Activated CD8-positive, alpha-beta T cell treated with anti-CD3 and anti-CD28 coated beads for 36 hours (primary cell): ENCODE measurements at regions of chr5 and their contacts with region 1.

Region 1: DNA sequence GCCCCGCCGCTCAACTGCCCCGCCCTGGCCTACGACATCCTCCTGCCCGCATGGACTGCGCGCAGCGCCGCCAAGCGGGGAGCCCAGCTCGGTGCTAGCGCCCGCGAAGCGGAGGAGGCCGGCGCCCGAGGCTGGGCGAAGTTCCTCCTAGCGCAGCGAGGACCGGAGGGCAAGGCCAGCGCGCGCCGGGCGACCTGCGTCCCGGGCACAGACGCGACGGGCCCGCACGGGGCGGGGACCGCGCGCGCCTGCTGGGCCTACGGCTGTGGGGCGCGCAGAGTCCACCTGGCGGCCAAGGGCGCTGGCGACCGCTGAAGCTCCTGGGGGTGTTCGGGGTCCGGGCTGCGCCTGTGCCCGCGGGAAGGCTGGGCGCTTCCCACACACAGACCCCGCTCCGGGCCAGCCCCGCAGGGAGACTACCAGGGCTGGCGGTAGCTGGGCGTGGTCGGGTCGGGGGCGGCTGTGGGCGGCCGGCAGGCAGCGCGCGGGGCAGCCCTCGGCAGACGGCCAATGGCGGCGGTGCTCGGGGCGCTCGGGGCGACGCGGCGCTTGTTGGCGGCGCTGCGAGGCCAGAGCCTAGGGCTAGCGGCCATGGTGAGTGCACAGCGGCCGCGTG is at the start of gene PCBD2:
- DNase-seq: peak; percentile 94
- ATAC-seq: peak; percentile 90
- H3K4me3 Mint-ChIP-seq: peak within 1 kb of the TSS; percentile 92
- H3K27ac Mint-ChIP-seq: peak within 1 kb of the TSS; percentile 99
- H3K4me1 Mint-ChIP-seq: peaks cover 17% of the 10 kb centered on the region
- H3K27me3 Mint-ChIP-seq: no peaks in the 10 kb centered on the region
- CTCF ChIP-seq: peak; percentile 82
- total RNA-seq, gene PCBD2: 8.1 to 8.8 TPM

Region 2: DNA sequence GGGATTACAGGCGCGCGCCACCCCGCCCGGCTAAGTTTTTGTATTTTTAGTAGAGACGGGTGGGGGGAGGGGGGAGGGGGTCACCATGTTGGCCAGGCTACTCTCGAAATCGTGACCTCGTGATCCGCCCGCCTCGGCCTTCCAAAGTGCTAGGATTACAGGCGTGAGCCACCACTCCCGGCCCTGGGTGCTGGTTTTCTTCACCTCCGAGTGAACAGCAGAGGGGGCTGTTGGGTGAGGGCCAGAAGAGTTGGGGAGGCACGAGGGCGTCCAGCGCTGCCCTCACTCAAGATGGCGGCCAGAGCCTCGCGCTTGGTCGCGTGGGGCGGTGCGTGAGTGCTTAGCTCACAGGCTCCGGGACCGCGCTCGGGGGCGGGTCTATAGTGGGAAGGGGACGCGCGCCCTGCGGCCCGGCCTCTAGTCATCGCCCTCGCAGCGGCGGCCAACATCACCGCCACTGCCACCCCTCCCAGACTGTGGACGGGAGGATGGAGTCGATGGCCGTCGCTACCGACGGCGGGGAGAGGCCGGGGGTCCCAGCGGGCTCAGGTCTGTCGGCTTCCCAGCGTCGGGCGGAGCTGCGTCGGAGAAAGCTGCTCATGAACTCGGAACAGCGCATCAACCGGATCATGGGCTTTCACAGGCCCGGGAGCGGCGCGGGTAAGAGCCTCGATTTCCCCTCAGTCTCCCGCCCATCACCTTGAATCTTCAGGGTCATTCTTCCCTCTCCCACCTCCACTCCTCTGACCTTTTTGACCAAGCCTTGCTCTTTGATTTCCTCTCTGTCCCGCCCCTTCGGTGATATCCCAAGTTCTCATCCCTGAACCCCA is 166.4 kb before region 1 on chr5 and contains the start of gene CAMLG:
- CTCF ChIA-PET with region 1: interaction called, 14 read pairs
- POLR2A ChIA-PET with region 1: interaction called, 15 read pairs
- intact Hi-C with region 1: no loop called
- DNase-seq: peak; percentile 98
- ATAC-seq: peak; percentile 97
- H3K4me3 Mint-ChIP-seq: peak within 1 kb of the TSS; percentile 91
- H3K27ac Mint-ChIP-seq: peak within 1 kb of the TSS; percentile 86
- H3K4me1 Mint-ChIP-seq: peaks cover 18% of the 10 kb centered on the region
- H3K27me3 Mint-ChIP-seq: no peaks in the 10 kb centered on the region
- CTCF ChIP-seq: peak; percentile 59
- total RNA-seq, gene CAMLG: 33.8 to 35.9 TPM

Region 3: DNA sequence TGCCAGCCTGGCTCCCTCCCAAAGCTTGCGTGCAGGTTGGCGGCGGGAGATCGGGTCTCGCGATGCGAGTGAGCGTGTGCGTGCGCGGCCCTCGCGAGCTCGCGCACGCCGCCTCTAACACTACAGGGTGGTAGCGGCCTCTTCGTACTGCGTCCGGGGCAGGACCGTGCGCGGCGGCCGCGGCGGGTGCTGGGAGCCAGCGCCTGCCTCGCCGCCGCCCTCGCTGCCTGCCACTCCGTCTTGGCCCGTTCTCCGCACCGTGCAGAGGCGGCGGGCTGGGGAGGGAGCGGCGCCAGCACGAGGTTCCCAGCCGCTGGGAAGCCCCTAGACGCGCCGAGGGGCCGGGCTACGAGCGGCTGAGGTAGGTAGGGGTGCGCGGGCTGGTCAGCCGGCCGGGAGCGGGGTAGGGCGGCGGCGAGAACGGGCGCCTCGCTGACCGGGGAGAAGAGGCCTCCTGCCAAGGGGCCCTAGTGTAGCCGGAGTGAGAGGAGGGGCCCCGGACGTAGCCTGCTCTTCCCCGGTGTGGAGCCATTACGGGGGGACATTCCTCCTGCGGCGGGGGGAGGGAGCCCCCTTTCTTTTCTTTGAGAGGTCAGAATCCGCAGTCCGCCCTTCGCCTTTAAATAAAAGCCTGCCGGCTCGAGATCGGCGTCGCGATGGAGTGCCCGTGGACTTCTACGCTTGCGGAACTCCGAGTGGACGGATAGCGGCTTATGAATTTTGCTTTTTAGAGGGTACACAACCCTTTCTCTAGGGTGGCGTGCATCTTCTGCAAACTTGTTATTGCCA is 58.7 kb before region 1 on chr5 and contains the start of gene C5orf24:
- CTCF ChIA-PET with region 1: interaction called, 21 read pairs
- POLR2A ChIA-PET with region 1: interaction called, 18 read pairs
- intact Hi-C with region 1: loop called (anchors 5 kb)
- DNase-seq: peak; percentile 94
- ATAC-seq: peak; percentile 95
- H3K4me3 Mint-ChIP-seq: peak within 1 kb of the TSS; percentile 91
- H3K27ac Mint-ChIP-seq: peak within 1 kb of the TSS; percentile 98
- H3K4me1 Mint-ChIP-seq: peaks cover 33% of the 10 kb centered on the region
- H3K27me3 Mint-ChIP-seq: no peaks in the 10 kb centered on the region
- CTCF ChIP-seq: no peak
- total RNA-seq, gene C5orf24: 24.4 to 25.3 TPM

Region 4: DNA sequence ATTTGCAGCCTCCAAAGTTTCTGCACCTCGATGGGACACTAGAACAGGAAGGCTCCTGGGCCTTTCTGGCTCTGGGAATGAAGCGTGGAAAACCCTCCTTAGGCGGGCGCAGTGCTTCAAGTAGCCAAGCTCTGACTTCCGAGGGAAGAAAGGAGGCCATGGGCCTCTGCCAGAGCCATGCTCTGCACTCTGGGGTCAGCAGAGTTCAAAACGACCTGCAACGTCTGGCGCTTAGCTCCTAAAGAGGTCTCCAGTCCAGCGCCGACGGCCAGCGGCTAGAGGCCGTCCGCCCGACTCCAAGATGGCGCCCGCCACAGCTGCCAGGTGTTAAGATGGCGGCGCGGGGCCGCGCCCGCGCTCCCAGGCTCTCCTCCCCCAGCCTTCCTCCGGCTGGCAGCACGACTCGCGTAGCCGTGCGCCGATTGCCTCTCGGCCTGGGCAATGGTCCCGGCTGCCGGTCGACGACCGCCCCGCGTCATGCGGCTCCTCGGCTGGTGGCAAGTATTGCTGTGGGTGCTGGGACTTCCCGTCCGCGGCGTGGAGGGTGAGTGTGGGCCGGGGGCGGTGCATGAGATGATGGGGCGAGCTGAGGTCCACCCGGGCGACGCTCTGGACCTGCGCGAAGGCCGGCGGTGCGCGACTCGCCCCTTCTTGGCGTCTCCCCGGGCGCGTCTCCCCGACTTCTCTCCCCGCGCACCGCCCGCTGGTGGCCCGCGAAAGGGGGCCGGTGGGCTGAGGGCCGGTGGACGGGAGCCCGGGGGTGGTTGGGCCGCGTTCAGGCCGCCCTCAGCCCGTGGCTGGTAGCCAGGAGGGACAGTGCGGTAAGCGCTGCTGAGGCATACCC is 30.5 kb before region 1 on chr5 and contains the start of gene TXNDC15:
- CTCF ChIA-PET with region 1: interaction called, 9 read pairs
- POLR2A ChIA-PET with region 1: interaction called, 19 read pairs
- intact Hi-C with region 1: no loop called
- DNase-seq: peak; percentile 87
- ATAC-seq: peak; percentile 87
- H3K4me3 Mint-ChIP-seq: peak within 1 kb of the TSS; percentile 85
- H3K27ac Mint-ChIP-seq: peak within 1 kb of the TSS; percentile 94
- H3K4me1 Mint-ChIP-seq: peaks cover 32% of the 10 kb centered on the region
- H3K27me3 Mint-ChIP-seq: no peaks in the 10 kb centered on the region
- CTCF ChIP-seq: no peak
- total RNA-seq, gene TXNDC15: 17.1 to 26.7 TPM

Region 5: DNA sequence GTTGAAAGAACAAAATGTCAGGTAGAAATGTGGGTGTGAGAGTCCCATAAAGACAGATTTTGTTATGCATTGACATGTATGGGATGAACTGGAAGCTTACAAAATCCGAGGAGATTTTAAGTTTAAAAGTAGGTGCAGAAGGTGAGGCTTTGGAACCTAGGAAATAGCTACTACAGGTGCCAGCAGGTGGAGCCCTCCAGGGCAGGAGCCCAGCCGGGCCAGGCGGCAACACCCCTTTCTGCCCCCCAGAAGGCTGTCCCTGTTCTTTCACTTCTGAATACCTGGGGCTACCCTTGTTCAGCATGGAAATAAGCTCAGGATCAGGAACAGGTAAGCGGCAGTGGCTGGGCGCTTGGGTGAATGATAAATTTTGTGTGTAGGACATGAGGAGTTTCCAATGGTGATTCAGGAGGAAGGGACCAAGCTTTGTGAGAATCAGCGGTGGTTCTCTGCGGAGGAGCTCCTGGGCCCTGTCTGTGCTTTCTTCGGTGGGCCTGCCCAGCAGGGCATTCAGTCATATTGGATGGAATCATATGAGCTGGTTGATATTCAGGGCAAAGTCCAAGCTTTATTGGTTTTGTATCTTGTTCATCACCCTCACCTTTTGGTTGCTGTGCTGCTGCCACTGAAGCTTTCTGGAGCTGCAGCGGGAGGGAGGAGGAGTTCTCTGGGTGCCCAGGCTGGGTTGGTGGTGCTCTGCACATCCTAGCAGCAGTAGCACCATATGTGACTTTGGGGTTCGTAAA is 12.5 kb after region 1 on chr5:
- CTCF ChIA-PET with region 1: interaction called, 53 read pairs
- POLR2A ChIA-PET with region 1: interaction called, 41 read pairs
- intact Hi-C with region 1: no loop called
- DNase-seq: peak; percentile 35
- ATAC-seq: no peak
- H3K4me3 Mint-ChIP-seq: no peak overlapping the region
- H3K27ac Mint-ChIP-seq: no peak overlapping the region
- H3K4me1 Mint-ChIP-seq: peaks cover 23% of the 10 kb centered on the region
- H3K27me3 Mint-ChIP-seq: no peaks in the 10 kb centered on the region
- CTCF ChIP-seq: peak; percentile 35